ENCODE measurements at regions of chr12 and their contacts with region 1.

Region 1: GRCh38 chr12:116202940-116203339 is 74.6 kb downstream of the MED13L start:
- DNase-seq: no peak
- H3K4me3 ChIP-seq: no peak overlapping the region
- H3K27me3 ChIP-seq: no peaks in the 10 kb centered on the region
- CTCF ChIP-seq: peak; percentile 50

Region 2: GRCh38 chr12:116180448-116180847 is 22.5 kb before region 1 on chr12:
- CTCF ChIA-PET with region 1: no interaction called
- POLR2A ChIA-PET with region 1: interaction called, 12 read pairs
- DNase-seq: no peak
- H3K4me3 ChIP-seq: no peak overlapping the region
- H3K27me3 ChIP-seq: no peaks in the 10 kb centered on the region
- CTCF ChIP-seq: no peak

Measured in BJ (cell line).